BJ (cell line): ENCODE measurements at regions of chr19 and their contacts with region 1.

Region 1: GRCh38 chr19:48297975-48298374 is 27.4 kb upstream of the EMP3 start:
- DNase-seq: no peak
- H3K4me3 ChIP-seq: no peak overlapping the region
- H3K27me3 ChIP-seq: peaks cover 3% of the 10 kb centered on the region; the same call in 1 of the 2 replicates
- CTCF ChIP-seq: no peak

Region 2: DNA sequence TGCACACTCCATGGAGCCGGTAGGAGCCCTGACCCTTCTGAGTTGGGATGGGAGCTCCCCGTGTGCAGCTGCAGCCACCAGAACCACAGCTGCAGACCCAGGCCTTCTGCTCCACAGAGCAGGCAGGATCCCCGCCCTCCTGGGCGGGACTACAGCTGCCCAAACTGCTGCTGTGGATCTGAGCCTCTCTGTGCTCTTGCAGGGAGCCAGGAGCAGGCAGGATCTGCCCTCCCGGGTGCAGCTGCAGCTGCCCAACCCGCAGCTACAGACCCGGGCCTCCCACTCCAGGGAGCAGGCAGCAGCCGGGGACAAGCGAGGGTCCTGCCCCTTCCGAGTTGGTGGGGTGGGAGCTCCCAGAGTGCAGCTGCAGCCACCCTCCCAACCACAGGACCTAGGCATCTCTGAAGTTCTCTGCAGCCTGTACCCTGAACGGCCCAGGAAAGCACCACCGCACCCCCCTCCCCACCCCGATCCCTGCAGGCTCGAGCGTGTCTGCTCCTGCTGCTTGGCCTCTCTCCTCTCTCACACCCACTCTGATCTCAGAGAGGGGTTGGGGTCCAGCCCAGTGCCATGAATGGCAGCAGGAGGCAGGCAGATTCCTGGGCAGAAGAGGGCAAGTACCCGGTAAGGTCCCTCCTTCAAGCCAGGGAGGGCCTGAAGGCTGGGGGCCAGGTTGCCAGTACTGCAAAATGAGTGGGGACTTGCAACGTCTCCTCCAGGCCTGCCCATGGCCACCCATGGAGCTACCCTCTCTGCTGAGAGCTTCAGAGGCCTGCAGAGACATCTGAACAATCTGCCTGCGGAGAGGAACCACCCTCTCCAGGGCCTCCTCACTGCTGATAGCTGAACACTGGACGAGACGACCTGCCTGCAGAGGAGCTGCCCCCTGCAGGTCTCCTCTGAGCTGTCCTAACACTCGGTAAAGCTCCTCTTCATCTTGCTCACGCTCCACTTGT is 10.9 kb after region 1 on chr19:
- CTCF ChIA-PET with region 1: interaction called, 10 read pairs
- POLR2A ChIA-PET with region 1: no interaction called
- DNase-seq: no peak
- H3K4me3 ChIP-seq: no peak overlapping the region
- H3K27me3 ChIP-seq: peaks cover 4% of the 10 kb centered on the region
- CTCF ChIP-seq: peak; percentile 49